IMR-90 (cell line): ENCODE measurements at regions of chr1 and their contacts with region 1.

Region 1: GRCh38 chr1:245493029-245493428 is 338.2 kb downstream of the KIF26B start:
- DNase-seq: no peak
- ATAC-seq: no peak
- H3K4me3 ChIP-seq: no peak overlapping the region
- H3K27ac ChIP-seq: no peak overlapping the region
- H3K4me1 ChIP-seq: no peaks in the 10 kb centered on the region
- H3K27me3 ChIP-seq: no peaks in the 10 kb centered on the region; the same call in 1 of the 2 replicates
- CTCF ChIP-seq: peak; percentile 13; the same call in 1 of the 2 replicates
- POLR2A ChIP-seq: no peak
- RAD21 ChIP-seq: no peak

Region 2: DNA sequence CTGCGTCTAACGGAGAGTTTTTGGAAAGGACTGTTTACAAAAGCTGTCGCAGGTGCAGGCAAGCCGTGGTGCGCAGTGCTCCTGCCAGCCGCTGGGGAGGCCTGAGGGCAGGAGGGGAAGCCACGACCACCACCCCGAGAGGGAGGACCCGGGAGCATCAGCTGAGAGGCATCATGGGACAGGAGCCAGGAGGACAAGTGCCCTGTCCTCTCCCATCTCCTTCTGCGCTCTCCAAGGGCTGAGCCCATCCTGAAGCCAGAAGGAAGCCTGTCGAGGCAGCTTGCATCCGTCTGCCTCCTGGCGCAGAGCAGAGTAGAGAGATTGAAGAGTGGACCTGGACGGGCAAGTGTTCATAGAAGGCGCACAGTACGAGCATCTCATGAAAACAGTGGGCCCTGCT is 27.4 kb before region 1 on chr1:
- CTCF ChIA-PET with region 1: no interaction called
- POLR2A ChIA-PET with region 1: no interaction called
- dilution Hi-C with region 1: no loop called
- in situ Hi-C with region 1: no loop called
- intact Hi-C with region 1: loop called (anchors 1 kb)
- DNase-seq: no peak
- ATAC-seq: no peak
- H3K4me3 ChIP-seq: no peak overlapping the region
- H3K27ac ChIP-seq: no peak overlapping the region
- H3K4me1 ChIP-seq: no peaks in the 10 kb centered on the region
- H3K27me3 ChIP-seq: no peaks in the 10 kb centered on the region
- CTCF ChIP-seq: no peak
- POLR2A ChIP-seq: no peak
- RAD21 ChIP-seq: no peak